Transverse colon (tissue), 4 donors: ENCODE measurements at regions of chr12 and their contacts with region 1.

Region 1: DNA sequence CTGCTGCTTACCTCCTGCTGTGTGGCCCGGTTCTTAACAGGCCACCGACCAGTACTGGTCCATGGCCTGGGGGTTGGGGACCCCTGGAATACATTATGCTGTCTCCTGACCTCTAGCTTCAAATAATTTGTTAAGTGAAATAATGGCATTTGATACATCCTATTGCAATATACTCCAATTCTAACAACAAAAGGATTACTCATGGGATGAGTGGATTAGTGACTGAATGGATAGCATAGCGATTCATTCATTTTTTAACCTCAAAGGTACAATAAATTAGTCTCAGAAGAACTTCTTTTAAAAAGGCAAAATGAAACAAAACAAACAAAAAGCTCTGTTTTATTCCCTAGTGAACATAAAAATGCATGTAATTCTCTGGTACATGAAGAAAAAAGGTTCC is 147.9 kb upstream of the PKP2 start:
- DNase-seq: no peak
- H3K4me3 ChIP-seq: no peak overlapping the region
- H3K27ac ChIP-seq: no peak overlapping the region
- H3K4me1 ChIP-seq: no peaks in the 10 kb centered on the region
- H3K27me3 ChIP-seq: no peaks in the 10 kb centered on the region
- CTCF ChIP-seq: no peak
- EP300 ChIP-seq: no peak
- POLR2A ChIP-seq: no peak

Region 2: DNA sequence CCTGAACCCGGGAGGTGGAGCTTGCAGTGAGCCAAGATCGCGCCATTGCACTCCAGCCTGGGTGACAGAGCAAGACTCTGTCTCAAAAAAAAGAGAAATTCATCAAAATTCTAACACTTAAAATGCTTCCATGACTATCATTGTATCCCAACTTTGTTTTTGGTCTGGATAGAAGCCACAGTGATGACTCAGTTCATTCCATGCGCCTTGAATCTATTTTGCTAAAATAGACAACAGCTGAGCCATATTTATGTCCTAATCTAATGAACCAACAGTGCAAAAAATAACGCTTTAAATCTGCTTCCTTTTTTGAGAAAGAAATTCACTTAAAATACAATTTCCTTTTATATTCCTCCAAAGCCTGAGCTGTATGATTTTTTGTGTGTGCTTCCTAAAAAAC is 961.0 kb before region 1 on chr12:
- in situ Hi-C with region 1: no loop called
- intact Hi-C with region 1: no loop called
- DNase-seq: no peak
- H3K4me3 ChIP-seq: no peak overlapping the region
- H3K27ac ChIP-seq: no peak overlapping the region
- H3K4me1 ChIP-seq: no peaks in the 10 kb centered on the region
- H3K27me3 ChIP-seq: no peaks in the 10 kb centered on the region
- CTCF ChIP-seq: no peak
- EP300 ChIP-seq: no peak
- POLR2A ChIP-seq: no peak

Region 3: GRCh38 chr12:33061844-33062243 is 17.4 kb after region 1 on chr12:
- in situ Hi-C with region 1: no loop called
- intact Hi-C with region 1: loop called (anchors 1 kb)
- DNase-seq: no peak
- H3K4me3 ChIP-seq: no peak overlapping the region
- H3K27ac ChIP-seq: no peak overlapping the region
- H3K4me1 ChIP-seq: no peaks in the 10 kb centered on the region
- H3K27me3 ChIP-seq: no peaks in the 10 kb centered on the region
- CTCF ChIP-seq: no peak
- EP300 ChIP-seq: no peak
- POLR2A ChIP-seq: no peak

Region 4: DNA sequence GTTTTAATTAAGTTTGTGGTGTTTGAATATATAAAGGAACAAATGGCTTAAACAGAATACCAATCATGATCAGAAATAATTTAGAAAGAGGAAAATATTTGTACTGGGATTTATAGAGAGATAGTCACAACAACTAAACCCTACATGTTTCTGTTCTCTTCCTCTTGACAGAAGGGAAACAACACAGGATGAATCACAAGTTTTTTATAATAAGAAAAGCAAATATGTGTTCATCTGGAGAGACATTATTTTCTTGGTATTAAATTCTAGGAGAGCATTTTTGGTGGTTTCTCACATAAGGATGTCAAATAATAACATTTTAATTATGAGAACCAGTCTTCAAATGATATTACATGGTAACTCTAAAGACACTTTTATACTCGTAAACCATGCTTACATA is 85.1 kb after region 1 on chr12:
- in situ Hi-C with region 1: loop called in 1 of 4 experiments (anchors 25 kb)
- intact Hi-C with region 1: no loop called
- DNase-seq: no peak
- H3K4me3 ChIP-seq: no peak overlapping the region
- H3K27ac ChIP-seq: no peak overlapping the region
- H3K4me1 ChIP-seq: no peaks in the 10 kb centered on the region
- H3K27me3 ChIP-seq: no peaks in the 10 kb centered on the region
- CTCF ChIP-seq: no peak
- EP300 ChIP-seq: no peak
- POLR2A ChIP-seq: no peak